ENCODE measurements at regions of chr1 and their contacts with region 1.

Region 1: DNA sequence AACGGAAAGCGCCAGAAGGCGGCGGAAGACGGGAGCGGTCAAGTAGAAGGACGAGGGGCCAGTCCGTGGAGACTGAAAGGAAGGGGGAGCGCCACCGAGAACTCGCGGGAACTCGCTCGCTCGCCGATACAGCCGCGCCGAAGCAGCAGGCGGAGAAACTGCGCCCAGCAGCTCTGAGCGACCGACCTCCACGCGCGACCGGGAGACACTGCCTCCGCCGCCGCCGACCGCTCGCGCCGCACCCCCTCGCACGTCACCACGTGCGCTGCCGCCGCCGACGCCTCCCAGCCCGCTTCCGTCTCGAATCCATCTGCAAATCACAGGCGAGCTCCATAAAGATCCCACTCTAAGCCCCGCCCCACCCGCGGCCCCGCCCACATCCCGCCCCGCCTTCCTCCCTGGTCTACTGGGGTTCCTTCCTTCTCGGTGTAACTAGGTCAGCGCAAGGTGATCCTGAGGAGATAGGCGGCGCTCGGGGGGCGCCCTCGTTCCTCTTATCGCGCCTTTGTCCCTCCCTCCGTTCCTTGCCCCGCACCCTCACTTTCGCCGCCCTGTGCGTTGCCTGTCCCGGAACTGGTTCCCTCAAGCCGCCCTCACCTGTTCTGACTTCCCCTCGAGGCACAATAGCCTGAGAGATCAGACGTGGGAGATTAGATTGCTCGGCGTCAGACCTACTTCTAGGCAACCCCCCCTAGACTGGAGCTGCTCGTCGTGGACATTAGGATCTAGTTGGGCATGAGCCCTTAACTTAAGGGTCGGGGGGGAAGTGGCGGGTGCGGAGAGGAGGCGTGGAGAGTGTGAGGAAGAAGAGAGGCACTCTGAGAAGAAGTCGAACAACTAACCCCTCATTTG is at the start of gene IVNS1ABP:
- DNase-seq: peak; percentile 97
- ATAC-seq: peak; percentile 91
- total RNA-seq, gene IVNS1ABP: 59.0 TPM

Region 2: GRCh38 chr1:185426848-185427247 is 109.6 kb after region 1 on chr1:
- intact Hi-C with region 1: loop called (anchors 5 kb)
- DNase-seq: peak; percentile 63
- ATAC-seq: peak; percentile 88

Region 3: DNA sequence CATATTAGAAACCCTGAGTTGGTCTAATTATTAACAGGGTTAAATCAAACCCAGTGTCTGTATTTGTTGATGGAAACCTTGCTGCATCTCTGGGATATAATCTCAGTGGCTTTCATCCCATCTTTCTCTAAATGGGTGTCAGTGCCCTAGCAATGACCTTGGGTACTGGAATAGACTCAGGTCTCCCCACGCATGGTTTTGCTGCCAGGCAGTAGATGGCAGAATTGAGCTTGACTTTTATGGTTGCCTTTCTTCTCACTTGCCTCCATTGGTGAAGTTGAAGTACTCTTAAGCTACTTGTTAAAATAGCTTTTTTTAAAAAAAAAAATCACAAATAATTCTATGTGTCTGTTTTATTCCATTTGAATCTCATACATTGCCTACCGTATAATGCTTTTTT is 335.1 kb after region 1 on chr1:
- intact Hi-C with region 1: loop called (anchors 5 kb)
- DNase-seq: no peak
- ATAC-seq: no peak